Activated CD8-positive, alpha-beta memory T cell treated with anti-CD3 and anti-CD28 coated beads, Interleukin-2, amount 10 ng/mL, durations not matched to agents 7 days and 5 days (primary cell): ENCODE measurements at regions of chr3 and their contacts with region 1.

Region 1: DNA sequence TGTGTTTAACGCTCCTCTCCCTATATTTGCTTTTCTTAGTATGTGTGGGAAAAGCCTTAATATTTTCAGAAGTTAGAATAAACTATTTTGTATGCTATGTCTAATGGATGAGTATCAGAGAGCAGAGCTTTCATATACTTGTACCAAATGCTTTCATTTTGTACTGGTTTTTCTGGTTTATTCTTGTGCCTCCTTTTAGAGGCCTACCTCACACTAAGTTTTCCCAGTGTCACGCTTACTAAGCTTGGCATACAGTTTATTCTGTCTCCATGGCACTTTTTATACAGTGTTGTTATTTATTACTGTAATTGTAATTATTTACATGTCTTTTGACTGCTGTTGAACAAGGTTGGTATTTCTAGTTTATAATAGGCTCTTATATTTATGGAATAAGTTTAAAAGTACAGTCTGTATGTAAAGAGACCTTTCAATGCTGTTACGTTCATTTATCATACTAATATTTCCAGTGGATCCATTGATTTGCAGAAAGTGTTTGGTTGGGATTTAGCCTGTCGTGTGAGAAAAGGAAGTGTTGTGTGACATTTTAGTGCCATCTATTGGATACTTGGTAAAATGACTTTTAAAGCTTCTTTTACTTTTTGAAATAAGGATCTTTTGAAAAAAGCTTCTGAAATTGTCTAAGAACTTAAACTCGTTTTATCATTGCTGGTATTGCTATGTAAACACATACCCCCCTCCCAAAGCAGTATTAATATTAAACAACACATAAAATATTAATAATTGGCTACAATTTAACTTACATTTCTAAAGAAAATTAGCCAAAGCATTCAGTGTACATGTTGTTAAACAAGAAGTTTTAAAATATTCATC is 5.2 kb upstream of the EBLN2 start:
- DNase-seq: no peak
- ATAC-seq: no peak
- H3K4me3 Mint-ChIP-seq: no peak overlapping the region
- H3K27ac Mint-ChIP-seq: no peak overlapping the region
- H3K4me1 Mint-ChIP-seq: peaks cover 10% of the 10 kb centered on the region
- H3K27me3 Mint-ChIP-seq: no peaks in the 10 kb centered on the region

Region 2: DNA sequence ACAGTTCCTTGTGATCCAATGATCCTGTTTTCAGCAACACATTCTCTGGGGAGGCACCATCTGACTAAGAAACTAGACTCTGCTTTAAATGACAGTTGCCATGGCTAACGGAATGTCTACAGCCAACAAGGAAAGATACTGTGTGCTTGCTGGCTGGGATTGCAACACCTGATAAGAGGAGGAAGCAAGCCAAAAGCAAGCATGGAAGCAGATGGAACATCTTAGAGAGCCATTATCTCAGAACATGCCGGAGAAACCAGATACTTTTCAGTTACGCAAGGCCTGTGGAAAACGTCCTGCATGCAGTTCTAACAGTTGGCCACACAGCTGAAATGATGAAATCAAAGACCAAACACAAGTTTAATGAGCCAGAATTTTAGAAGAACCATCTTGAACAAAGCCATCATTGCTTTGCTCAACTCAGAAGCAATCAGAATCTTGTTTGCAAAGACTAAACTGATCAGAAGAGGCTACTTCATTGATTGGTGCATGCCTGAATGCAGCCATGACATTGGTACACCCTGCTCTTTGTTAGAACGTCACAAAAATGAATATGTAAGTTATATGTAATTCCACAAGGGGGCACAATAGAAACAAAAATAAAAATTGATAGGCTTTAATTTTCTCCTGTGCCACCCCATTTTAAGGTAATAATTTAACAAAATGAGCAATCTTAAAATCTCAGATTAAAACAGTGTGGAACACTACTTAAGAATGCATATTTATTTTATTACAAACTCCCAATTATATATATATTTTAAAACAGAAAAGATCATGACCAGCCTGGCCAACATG is 117.6 kb before region 1 on chr3:
- CTCF ChIA-PET with region 1: interaction called, 65 read pairs
- DNase-seq: no peak
- ATAC-seq: peak; percentile 94
- H3K4me3 Mint-ChIP-seq: no peak overlapping the region
- H3K27ac Mint-ChIP-seq: no peak overlapping the region
- H3K4me1 Mint-ChIP-seq: no peaks in the 10 kb centered on the region
- H3K27me3 Mint-ChIP-seq: peaks cover 27% of the 10 kb centered on the region

Region 3: DNA sequence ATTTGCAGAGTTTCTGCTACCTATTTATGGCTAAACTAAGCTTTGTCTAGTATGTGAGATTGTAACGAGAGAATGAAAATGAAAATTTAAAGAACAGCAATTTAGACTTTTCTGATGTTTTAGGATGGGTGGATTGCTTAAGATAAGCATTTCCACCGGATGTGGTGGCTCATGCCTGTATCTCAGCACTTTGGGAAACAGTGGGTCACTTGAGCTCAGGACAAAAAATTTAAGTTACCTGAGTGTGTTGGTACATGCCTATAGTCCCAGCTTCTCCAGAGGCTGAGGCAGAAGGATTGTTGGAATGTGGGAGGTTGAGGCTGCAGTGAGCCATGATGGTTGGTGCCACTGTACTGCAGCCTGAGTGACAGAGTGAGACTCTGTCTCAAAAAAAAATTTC is 56.3 kb before region 1 on chr3:
- CTCF ChIA-PET with region 1: interaction called, 15 read pairs
- DNase-seq: peak; percentile 55
- ATAC-seq: no peak
- H3K4me3 Mint-ChIP-seq: peak overlapping the region; percentile 87
- H3K27ac Mint-ChIP-seq: peak overlapping the region; percentile 77
- H3K4me1 Mint-ChIP-seq: peaks cover 53% of the 10 kb centered on the region
- H3K27me3 Mint-ChIP-seq: no peaks in the 10 kb centered on the region

Region 4: DNA sequence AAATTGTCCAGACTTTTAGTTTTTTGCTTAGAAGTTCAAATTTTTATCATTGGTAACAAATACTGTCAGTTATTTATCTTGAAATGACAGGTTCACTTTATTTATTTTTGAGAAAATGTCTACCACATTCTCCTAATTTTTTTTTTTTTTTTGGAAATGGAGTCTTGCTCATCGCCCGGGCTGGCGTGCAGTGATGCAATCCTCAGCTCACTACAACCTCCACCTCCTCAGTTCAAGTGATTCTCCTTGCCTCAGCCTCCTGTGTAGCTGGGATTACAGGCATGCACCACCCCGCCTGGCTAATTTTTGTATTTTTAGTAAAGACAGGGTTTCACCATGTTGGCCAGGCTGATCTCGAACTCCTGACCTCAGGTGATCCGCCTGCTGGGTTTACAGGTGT is 10.8 kb before region 1 on chr3:
- CTCF ChIA-PET with region 1: interaction called, 12 read pairs
- DNase-seq: no peak
- ATAC-seq: no peak
- H3K4me3 Mint-ChIP-seq: no peak overlapping the region
- H3K27ac Mint-ChIP-seq: no peak overlapping the region
- H3K4me1 Mint-ChIP-seq: peaks cover 28% of the 10 kb centered on the region
- H3K27me3 Mint-ChIP-seq: no peaks in the 10 kb centered on the region

Region 5: DNA sequence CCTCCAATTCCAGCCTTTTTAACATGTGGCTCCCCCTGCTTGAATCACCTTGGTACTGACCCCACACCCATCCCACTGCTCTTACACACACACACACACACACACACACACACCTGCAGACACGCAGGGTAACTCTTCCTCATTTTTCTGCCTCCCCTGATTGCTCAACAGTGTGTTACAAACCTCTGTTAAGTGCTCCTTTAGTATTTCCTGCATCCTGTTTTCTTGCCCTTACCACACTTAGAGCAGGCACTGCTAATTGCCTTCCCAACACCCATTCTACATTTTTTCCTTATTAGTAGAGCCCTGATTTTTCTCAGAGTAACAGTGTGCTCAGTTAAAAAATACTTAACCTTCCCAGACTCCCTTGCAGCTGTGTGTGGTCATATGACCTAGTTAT is 189.2 kb after region 1 on chr3:
- CTCF ChIA-PET with region 1: no interaction called
- DNase-seq: no peak
- ATAC-seq: no peak
- H3K4me3 Mint-ChIP-seq: no peak overlapping the region
- H3K27ac Mint-ChIP-seq: no peak overlapping the region
- H3K4me1 Mint-ChIP-seq: no peaks in the 10 kb centered on the region
- H3K27me3 Mint-ChIP-seq: no peaks in the 10 kb centered on the region